Mammary epithelial cell (primary cell): ENCODE measurements at regions of chr22 and their contacts with region 1.

Region 1: GRCh38 chr22:26450453-26451185 is 21.6 kb downstream of the ASPHD2 start:
- DNase-seq: no peak
- H3K4me3 ChIP-seq: no peak overlapping the region
- H3K27ac ChIP-seq: no peak overlapping the region
- H3K4me1 ChIP-seq: no peaks in the 10 kb centered on the region
- H3K27me3 ChIP-seq: no peaks in the 10 kb centered on the region
- CTCF ChIP-seq: no peak

Region 2: GRCh38 chr22:26143801-26144325 is 306.8 kb before region 1 on chr22:
- CTCF ChIA-PET with region 1: no interaction called
- dilution Hi-C with region 1: no loop called
- in situ Hi-C with region 1: no loop called
- intact Hi-C with region 1: no loop called
- DNase-seq: no peak
- H3K4me3 ChIP-seq: no peak overlapping the region
- H3K27ac ChIP-seq: no peak overlapping the region
- H3K4me1 ChIP-seq: no peaks in the 10 kb centered on the region
- H3K27me3 ChIP-seq: no peaks in the 10 kb centered on the region
- CTCF ChIP-seq: no peak

Region 3: DNA sequence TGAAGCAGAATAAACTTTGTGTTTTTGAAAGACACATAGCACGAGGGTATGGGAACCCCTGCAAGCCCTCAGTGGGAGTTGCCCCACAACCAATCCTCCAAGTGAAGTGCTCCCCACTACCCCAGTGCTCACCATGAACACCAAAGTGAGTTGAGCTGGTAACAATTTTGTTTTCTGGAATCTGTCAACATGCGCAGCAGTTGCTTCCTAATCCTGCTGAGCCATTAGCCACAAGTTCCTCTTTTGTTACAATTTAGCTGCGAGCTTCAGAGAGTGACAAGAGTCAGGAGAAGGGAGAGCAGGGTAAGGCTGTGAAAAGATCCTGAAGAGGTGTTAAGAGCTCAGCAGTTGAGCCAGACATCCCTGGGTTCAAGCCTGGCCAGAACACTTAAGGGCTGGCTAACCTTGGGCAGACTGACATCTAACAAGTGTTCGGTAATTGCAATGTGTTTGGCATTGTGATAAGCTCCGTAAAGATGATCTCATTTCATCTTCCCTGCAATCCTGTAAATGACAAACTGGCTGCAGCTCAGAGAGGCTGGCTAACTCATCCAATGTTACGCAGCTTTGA is 45.7 kb before region 1 on chr22:
- CTCF ChIA-PET with region 1: no interaction called
- dilution Hi-C with region 1: no loop called
- in situ Hi-C with region 1: loop called in 1 of 2 experiments (anchors 10 kb)
- intact Hi-C with region 1: no loop called
- DNase-seq: no peak
- H3K4me3 ChIP-seq: no peak overlapping the region
- H3K27ac ChIP-seq: no peak overlapping the region
- H3K4me1 ChIP-seq: no peaks in the 10 kb centered on the region
- H3K27me3 ChIP-seq: no peaks in the 10 kb centered on the region
- CTCF ChIP-seq: no peak